ENCODE measurements at regions of chr9 and their contacts with region 1.

Region 1: DNA sequence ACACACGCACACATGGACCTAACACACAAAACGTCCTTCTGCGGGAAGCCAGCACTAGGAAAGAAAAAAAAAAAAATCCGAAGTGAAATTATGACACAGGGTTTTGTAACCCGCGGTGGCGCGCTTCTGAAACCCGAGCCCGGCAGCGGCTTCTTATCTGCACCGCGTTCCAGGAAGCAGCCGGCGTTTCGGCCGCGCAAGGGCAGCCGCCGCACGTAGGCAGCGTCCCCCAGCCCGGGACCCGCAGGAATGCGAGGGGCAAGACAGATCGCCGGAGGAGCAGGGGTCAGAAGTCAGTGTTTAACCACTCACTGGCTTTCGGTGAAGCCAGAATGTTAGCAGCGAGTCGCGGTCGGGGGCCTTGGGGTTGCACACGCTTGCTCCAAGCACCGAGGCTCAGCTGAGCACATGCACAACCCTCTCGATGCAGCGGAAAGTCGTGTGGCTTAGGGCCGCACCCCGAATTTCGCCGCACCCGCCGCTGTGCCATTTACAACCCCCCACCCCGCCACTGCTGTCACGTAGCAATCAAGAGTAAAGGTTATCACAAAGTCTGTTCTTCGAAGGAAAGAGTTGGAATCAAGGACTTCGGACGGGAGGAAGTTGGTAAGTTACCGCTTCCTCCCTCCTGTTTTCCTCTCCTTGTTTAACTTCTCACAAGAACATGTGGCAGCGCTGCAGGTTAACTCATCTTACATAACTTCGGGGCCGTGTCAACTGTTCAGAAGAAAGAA is 167.9 kb downstream of the AUH start:
- DNase-seq: peak; percentile 71
- ATAC-seq: peak; percentile 58
- H3K4me3 ChIP-seq: peak overlapping the region; percentile 67
- H3K27ac ChIP-seq: peak overlapping the region; percentile 100
- H3K4me1 ChIP-seq: peaks cover 49% of the 10 kb centered on the region
- H3K27me3 ChIP-seq: no peaks in the 10 kb centered on the region
- CTCF ChIP-seq: no peak

Region 2: DNA sequence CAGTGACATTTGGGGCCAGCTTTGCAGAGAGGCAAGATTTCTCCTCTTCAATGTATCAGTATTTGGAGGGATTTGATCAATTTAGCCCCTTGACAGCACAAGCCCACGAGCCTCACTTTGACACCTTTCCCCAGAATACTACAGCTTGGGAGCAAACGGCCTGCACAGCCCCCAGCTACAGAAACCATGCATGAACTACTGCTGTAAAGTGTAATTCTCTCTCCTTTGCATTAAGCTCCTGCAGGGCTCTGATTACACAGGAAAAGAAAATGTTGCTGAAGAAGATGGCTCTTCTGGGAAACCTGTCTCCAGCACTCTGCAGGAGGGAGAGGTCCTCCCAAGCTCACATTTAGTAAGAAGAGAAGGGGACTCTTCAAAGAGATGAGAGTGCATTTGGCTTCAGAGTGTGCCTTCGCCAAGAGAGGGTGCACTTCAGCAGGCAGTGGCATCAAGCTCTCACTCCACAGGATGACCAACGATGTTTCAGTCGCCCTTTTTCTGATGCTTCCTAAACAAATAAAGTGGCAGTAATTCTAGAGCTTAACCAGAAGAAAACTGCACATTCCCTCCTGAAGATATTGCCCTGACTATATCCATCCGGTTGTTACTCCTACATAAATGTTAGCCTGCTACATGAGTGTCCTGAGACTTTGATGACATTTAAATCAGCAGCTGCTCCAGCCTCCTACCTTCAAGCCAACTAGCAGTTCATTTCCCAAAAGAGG is 104.3 kb before region 1 on chr9:
- CTCF ChIA-PET with region 1: interaction called, 4 read pairs
- POLR2A ChIA-PET with region 1: interaction called, 3 read pairs
- intact Hi-C with region 1: loop called (anchors 5 kb)
- DNase-seq: peak; percentile 64
- ATAC-seq: peak; percentile 96
- H3K4me3 ChIP-seq: no peak overlapping the region
- H3K27ac ChIP-seq: 0 out of 2 replicates have a peak overlapping the region, but pooled peaks have one; percentile 6
- H3K4me1 ChIP-seq: no peaks in the 10 kb centered on the region
- H3K27me3 ChIP-seq: no peaks in the 10 kb centered on the region
- CTCF ChIP-seq: peak; percentile 67

Region 3: GRCh38 chr9:91106415-91107081 is 87.3 kb before region 1 on chr9:
- CTCF ChIA-PET with region 1: no interaction called
- POLR2A ChIA-PET with region 1: no interaction called
- intact Hi-C with region 1: no loop called
- DNase-seq: no peak
- ATAC-seq: no peak
- H3K4me3 ChIP-seq: no peak overlapping the region
- H3K27ac ChIP-seq: no peak overlapping the region
- H3K4me1 ChIP-seq: no peaks in the 10 kb centered on the region
- H3K27me3 ChIP-seq: no peaks in the 10 kb centered on the region
- CTCF ChIP-seq: no peak

Region 4: DNA sequence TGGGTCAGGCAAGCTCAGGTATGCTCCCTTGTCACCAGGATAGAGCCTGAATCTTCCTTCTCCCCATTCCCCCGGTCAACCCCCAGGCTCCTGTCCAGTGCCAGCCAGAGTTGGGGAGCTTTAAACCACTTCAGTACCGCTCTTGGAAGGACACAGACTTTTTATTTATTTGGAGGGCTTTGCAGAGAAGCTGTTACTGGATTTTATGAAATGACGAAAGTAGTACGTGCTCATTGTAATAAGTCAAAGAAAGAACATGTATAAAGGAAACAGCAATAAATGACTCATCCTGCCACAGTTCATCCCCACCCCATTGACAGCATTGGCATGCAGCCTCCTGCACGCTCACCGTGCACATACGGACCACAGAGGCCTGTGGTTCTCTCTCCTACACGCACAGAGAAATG is 62.4 kb before region 1 on chr9:
- CTCF ChIA-PET with region 1: no interaction called
- POLR2A ChIA-PET with region 1: interaction called, 3 read pairs
- intact Hi-C with region 1: loop called (anchors 2 kb)
- DNase-seq: peak; percentile 88
- ATAC-seq: peak; percentile 89
- H3K4me3 ChIP-seq: peak overlapping the region; percentile 30; the same call in 1 of the 2 replicates
- H3K27ac ChIP-seq: peak overlapping the region; percentile 99
- H3K4me1 ChIP-seq: peaks cover 41% of the 10 kb centered on the region
- H3K27me3 ChIP-seq: no peaks in the 10 kb centered on the region
- CTCF ChIP-seq: no peak

Region 5: GRCh38 chr9:91164724-91165520 is 28.9 kb before region 1 on chr9:
- CTCF ChIA-PET with region 1: no interaction called
- POLR2A ChIA-PET with region 1: no interaction called
- intact Hi-C with region 1: loop called (anchors 1 kb)
- DNase-seq: peak; percentile 89
- ATAC-seq: peak; percentile 84
- H3K4me3 ChIP-seq: no peak overlapping the region
- H3K27ac ChIP-seq: peak overlapping the region; percentile 87
- H3K4me1 ChIP-seq: peaks cover 42% of the 10 kb centered on the region
- H3K27me3 ChIP-seq: no peaks in the 10 kb centered on the region
- CTCF ChIP-seq: no peak

Region 6: DNA sequence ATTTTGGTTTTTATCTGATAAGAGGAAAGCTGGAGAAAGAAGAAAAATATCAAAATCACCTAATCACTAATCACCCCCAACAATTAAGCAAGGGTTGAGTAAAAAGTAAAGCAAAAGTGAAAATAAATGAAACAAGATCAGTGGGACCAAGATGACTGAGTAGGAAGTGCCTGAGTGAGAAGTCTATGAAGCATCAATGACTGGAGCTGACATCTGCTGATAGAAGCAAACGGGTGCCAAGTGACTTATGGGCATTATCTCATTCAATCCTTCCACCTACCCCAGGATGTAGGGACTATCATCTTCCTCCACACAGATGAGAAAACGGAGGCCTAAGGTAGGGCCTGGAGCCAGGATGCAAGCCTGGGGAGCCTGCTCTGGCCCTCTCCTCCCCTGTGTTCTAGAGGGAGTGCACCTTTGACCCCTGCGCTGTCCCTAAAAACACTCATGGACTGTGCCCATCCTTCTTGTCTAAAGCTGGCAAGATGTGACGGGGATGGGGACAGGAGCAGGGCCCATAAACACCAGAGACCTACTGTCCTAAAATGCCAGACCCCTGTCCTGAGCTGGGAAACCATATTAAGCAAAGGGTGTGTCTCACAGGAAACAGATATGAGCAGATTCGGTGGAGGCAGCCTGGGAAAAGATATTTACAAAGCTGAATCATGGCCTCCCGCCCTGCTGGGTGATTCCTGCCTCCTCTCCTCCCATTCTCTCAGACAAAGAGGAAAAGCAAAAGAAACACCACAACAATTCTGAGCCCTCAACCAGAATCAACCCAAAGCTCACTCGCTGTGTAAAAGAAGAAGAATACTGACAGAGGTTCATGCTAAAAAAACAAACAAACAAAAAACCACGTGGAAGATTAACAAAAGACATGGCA is 51.8 kb after region 1 on chr9:
- CTCF ChIA-PET with region 1: no interaction called
- POLR2A ChIA-PET with region 1: no interaction called
- intact Hi-C with region 1: loop called (anchors 5 kb)
- DNase-seq: peak; percentile 69
- ATAC-seq: peak; percentile 96
- H3K4me3 ChIP-seq: no peak overlapping the region
- H3K27ac ChIP-seq: peak overlapping the region; percentile 91
- H3K4me1 ChIP-seq: peaks cover 18% of the 10 kb centered on the region
- H3K27me3 ChIP-seq: no peaks in the 10 kb centered on the region
- CTCF ChIP-seq: no peak

Region 7: GRCh38 chr9:91312717-91313344 is 119.0 kb after region 1 on chr9:
- CTCF ChIA-PET with region 1: no interaction called
- POLR2A ChIA-PET with region 1: no interaction called
- intact Hi-C with region 1: no loop called
- DNase-seq: peak; percentile 92
- ATAC-seq: peak; percentile 48; the same call in 1 of the 2 replicates
- H3K4me3 ChIP-seq: no peak overlapping the region
- H3K27ac ChIP-seq: peak overlapping the region; percentile 51
- H3K4me1 ChIP-seq: peaks cover 20% of the 10 kb centered on the region
- H3K27me3 ChIP-seq: no peaks in the 10 kb centered on the region
- CTCF ChIP-seq: no peak

Measured in PC-3 (cell line).